Calu3 (cell line): ENCODE measurements at regions of chr14 and their contacts with region 1.

Region 1: GRCh38 chr14:70816525-70816924 is 7.2 kb upstream of the MAP3K9 start:
- DNase-seq: no peak
- H3K4me3 Mint-ChIP-seq: no peak overlapping the region
- H3K27ac Mint-ChIP-seq: no peak overlapping the region
- H3K4me1 Mint-ChIP-seq: no peaks in the 10 kb centered on the region
- H3K27me3 Mint-ChIP-seq: no peaks in the 10 kb centered on the region
- CTCF ChIP-seq: no peak

Region 2: DNA sequence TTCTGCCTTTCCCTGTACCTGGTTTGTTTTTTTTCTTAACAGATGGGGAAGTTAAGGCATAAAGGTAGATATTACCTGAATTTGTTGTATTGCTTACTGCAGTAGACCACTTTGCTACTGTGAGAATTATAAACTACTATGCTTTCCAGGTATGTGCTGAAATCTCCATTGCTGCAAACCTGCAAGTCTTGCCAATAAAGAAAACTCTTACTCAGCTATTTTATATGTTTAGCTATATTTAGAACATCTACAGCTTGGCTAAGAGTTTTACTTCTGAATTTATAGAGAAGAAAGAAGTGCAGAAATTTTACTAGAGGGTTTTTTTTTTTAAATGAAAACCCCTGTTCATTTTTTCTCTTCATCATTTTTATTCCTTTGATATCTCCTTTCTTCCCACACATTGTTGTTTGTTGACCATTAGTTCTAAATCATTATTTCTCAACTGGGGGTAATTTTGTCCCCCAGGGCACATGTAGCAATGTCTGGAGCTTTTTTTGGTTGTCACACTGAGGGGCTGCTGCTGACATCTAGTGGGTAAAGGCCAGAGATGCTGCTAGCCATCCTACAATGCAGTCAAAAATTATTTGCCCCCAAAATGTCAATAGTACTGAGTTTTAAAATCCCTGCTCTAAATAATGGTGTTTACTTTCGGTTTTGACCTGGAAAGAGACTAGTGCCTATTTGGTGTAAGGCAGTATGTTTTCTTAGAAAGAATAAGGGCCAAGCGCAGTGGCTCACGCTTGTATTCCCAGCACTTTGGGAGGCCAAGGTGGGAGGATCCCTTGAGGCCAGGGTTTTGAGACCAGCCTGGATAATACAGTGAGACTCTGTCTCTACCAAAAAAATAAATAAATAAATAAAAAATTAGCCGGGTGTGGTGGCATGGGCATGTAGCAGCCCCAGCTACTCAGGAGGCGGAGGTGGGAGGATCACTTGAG is 139.3 kb after region 1 on chr14:
- CTCF ChIA-PET with region 1: no interaction called
- intact Hi-C with region 1: loop called (anchors 5 kb)
- DNase-seq: peak; percentile 17
- H3K4me3 Mint-ChIP-seq: no peak overlapping the region
- H3K27ac Mint-ChIP-seq: no peak overlapping the region
- H3K4me1 Mint-ChIP-seq: no peaks in the 10 kb centered on the region
- H3K27me3 Mint-ChIP-seq: no peaks in the 10 kb centered on the region
- CTCF ChIP-seq: peak; percentile 24

Region 3: DNA sequence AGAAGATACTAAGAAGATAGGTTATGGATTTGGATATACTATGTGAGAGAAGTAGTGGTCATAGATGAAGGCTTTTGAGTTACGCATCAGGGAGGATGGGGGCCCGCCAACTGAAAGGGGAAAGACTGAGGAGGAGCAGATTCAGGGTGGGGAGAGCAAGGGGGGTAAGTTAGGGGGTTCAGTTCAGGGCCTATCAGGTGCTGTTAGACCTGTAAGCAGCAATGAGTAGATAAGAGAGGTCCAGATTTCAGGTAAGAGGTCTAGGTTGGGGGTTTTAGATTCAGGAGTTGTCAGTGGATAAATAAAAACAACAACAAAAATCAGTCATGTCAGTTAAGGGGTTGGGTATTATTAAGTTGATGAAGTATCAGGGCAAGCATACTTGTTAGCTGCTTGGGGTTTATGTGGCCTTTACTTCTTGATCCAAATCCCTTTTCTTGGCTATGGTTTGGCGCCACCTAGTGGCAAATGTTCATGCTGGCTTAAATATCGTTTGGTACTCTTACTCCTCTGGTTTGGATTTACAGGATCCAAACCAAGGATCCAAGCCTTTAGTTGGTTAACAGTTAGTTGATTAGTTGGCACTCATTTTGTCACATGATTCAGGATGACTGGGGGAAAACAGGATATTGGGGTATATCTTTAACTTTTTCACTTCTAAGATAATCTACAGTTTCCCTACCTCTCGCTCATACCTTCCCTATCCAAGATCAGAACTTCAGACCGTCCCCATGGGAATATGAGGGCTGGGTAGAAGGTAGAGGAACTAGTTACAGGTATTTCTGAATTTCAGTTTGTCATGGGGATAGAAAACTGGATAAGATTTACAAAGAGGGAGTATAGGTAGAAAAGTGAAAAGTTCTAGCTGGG is 155.8 kb after region 1 on chr14:
- CTCF ChIA-PET with region 1: no interaction called
- intact Hi-C with region 1: loop called (anchors 2 kb)
- DNase-seq: peak; percentile 76
- H3K4me3 Mint-ChIP-seq: no peak overlapping the region
- H3K27ac Mint-ChIP-seq: no peak overlapping the region
- H3K4me1 Mint-ChIP-seq: no peaks in the 10 kb centered on the region
- H3K27me3 Mint-ChIP-seq: no peaks in the 10 kb centered on the region
- CTCF ChIP-seq: peak; percentile 63